ENCODE measurements at regions of chr5 and their contacts with region 1.

Region 1: DNA sequence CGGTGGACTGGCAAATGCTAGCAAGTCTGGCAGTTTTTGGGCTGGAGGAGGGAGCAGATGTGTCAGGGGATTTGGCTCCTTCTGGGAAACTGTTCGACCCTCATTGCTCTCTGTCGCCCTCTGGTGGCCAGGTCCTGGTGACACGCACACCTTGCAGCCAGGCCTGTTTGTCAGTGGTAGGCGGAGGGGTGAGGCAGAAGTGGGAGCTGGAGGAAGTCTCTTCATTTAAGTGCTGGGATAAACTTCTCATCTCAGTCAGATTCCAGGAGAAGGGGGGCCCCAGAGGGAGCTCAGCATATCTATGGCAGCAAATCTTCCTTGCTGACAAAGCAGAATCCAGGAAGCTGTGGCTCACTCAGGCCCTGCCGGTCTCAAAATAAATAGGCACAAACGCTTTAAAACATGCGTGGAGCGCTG is 326.5 kb downstream of the ZSWIM6 start:
- DNase-seq: peak; percentile 74
- H3K4me3 ChIP-seq: no peak overlapping the region
- H3K27ac ChIP-seq: no peak overlapping the region
- H3K4me1 ChIP-seq: no peaks in the 10 kb centered on the region
- H3K27me3 ChIP-seq: peaks cover 5 to 11% of the 10 kb centered on the region in 2 experiments
- CTCF ChIP-seq: peak; percentile 90 to 93
- POLR2A ChIP-seq: no peak

Region 2: DNA sequence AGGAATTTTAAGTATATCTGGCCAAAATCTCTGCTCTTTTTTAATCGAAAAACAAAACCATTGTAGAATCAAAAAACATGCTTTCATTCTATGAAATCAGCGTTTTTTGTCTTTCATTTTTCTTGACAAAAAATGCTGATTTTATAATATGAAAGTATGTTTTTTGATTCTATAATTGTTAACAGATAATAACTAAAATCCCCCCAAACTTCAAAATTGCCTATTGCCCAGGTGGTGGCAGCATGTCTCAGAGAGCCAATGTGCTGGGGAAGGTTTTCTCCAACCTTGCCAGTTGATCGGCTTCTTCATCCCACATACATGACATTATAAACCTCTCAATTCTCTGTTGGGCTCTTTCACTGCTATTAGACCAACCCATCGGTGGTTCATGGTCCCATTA is 491.2 kb before region 1 on chr5:
- CTCF ChIA-PET with region 1: no interaction called
- POLR2A ChIA-PET with region 1: no interaction called
- dilution Hi-C with region 1: no loop called
- intact Hi-C with region 1: loop called (anchors 1 kb)
- DNase-seq: peak; percentile 55
- H3K4me3 ChIP-seq: no peak overlapping the region
- H3K27ac ChIP-seq: no peak overlapping the region
- H3K4me1 ChIP-seq: peaks cover 4% of the 10 kb centered on the region
- H3K27me3 ChIP-seq: no peaks in the 10 kb centered on the region
- CTCF ChIP-seq: peak; percentile 33 to 43
- POLR2A ChIP-seq: no peak

Region 3: DNA sequence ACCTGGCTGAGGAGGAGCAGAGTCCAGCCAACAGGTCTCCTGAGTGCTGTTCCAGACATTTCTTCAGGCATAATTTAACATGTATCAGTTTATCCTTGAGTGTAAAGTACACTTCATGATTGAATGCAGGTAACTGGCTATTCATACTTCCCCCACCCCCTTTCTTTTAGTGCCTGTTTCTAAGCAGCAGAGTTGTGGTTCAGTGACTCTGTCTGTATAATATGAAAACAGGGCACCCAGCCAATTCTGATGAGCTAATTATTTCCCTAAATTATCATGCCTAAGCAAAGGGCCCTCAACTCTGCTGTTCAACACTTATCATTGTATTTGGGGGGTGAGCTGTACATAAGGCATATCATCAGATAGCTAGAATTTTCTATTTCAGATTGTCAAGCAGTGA is 378.4 kb before region 1 on chr5:
- CTCF ChIA-PET with region 1: interaction called, 9 read pairs
- POLR2A ChIA-PET with region 1: no interaction called
- dilution Hi-C with region 1: no loop called
- intact Hi-C with region 1: loop called (anchors 1 kb)
- DNase-seq: peak; percentile 89
- H3K4me3 ChIP-seq: no peak overlapping the region
- H3K27ac ChIP-seq: no peak overlapping the region
- H3K4me1 ChIP-seq: peaks cover 39% of the 10 kb centered on the region
- H3K27me3 ChIP-seq: no peaks in the 10 kb centered on the region
- CTCF ChIP-seq: no peak
- POLR2A ChIP-seq: no peak

Region 4: GRCh38 chr5:61347080-61347479 is 311.5 kb before region 1 on chr5:
- CTCF ChIA-PET with region 1: interaction called, 10 read pairs
- POLR2A ChIA-PET with region 1: no interaction called
- dilution Hi-C with region 1: no loop called
- intact Hi-C with region 1: no loop called
- DNase-seq: no peak
- H3K4me3 ChIP-seq: no peak overlapping the region
- H3K27ac ChIP-seq: no peak overlapping the region
- H3K4me1 ChIP-seq: peaks cover 26% of the 10 kb centered on the region
- H3K27me3 ChIP-seq: no peaks in the 10 kb centered on the region
- CTCF ChIP-seq: no peak
- POLR2A ChIP-seq: no peak

Region 5: DNA sequence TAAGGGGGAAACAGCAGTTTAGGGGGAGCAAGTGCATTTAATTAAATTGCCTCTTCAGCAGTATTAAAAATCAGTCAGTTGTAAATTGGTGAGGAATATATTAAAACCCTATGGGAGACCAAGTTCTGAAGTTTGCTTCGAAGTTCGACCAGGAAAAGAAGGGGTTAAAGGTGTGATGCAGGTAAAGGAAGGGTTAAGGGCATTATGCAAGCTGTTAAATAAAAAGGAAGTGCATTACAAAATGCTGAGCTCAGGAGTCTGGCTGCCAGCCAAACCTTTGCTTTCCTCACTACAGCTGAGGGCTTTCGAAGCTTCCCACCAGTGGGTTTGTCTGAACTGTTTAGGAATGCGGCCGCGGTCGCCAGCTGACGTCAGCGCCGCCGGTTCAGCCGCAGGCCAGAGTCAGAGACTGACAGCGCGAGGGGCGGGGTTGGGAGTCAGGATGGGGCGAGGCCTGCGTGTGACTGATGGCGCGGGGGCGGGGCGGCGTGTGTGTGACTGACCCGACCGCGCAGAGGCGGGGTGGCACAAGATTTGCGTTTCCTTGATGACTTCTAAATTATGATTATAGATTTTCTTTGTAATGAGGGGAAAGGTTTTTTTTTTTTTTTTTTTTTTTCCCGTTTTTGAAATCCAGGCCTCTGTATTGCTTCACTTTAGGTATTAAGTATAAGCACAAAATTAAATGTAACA is 250.0 kb before region 1 on chr5:
- CTCF ChIA-PET with region 1: no interaction called
- POLR2A ChIA-PET with region 1: no interaction called
- dilution Hi-C with region 1: no loop called
- intact Hi-C with region 1: loop called (anchors 2 kb)
- DNase-seq: peak; percentile 99
- H3K4me3 ChIP-seq: peak overlapping the region in 2 of 3 experiments; percentile 15 to 63
- H3K27ac ChIP-seq: peak overlapping the region; percentile 97
- H3K4me1 ChIP-seq: peaks cover 21% of the 10 kb centered on the region
- H3K27me3 ChIP-seq: no peaks in the 10 kb centered on the region
- CTCF ChIP-seq: no peak
- POLR2A ChIP-seq: peak; percentile 52

Region 6: DNA sequence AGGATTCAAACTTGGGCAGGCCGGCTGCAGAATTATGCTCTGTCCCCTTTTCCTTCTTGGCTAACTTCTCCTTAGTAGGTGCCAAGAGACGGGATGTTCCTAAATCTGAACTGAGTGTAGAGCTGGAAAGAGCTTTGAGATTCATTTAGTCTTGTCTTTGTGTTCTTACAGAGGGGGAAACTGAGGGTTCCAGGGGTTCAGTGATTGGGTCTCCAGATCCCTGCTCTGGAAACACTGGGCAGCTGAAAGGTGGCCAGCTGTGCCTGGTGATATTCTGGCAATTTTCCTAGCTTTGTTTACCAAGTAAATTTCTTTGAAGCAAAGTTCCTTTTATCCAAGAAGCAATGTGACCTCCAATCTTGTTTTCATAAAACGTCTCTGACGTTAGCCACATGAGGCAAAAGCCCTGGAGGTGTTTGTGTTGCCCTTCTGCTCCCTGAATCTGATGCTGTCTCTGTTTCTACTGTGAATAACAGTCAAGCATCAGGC is 37.9 kb before region 1 on chr5:
- CTCF ChIA-PET with region 1: interaction called, 10 read pairs
- POLR2A ChIA-PET with region 1: no interaction called
- dilution Hi-C with region 1: no loop called
- intact Hi-C with region 1: no loop called
- DNase-seq: no peak
- H3K4me3 ChIP-seq: no peak overlapping the region
- H3K27ac ChIP-seq: no peak overlapping the region
- H3K4me1 ChIP-seq: peaks cover 7% of the 10 kb centered on the region
- H3K27me3 ChIP-seq: peaks cover 0 to 1% of the 10 kb centered on the region in 2 experiments
- CTCF ChIP-seq: no peak
- POLR2A ChIP-seq: no peak

Region 7: GRCh38 chr5:62284946-62285891 is 626.6 kb after region 1 on chr5:
- CTCF ChIA-PET with region 1: no interaction called
- POLR2A ChIA-PET with region 1: no interaction called
- dilution Hi-C with region 1: no loop called
- intact Hi-C with region 1: no loop called
- DNase-seq: no peak
- H3K4me3 ChIP-seq: no peak overlapping the region
- H3K27ac ChIP-seq: no peak overlapping the region
- H3K4me1 ChIP-seq: no peaks in the 10 kb centered on the region
- H3K27me3 ChIP-seq: peaks cover 0 to 4% of the 10 kb centered on the region in 2 experiments
- CTCF ChIP-seq: no peak
- POLR2A ChIP-seq: no peak